ENCODE measurements at regions of chr4 and their contacts with region 1.

Region 1: DNA sequence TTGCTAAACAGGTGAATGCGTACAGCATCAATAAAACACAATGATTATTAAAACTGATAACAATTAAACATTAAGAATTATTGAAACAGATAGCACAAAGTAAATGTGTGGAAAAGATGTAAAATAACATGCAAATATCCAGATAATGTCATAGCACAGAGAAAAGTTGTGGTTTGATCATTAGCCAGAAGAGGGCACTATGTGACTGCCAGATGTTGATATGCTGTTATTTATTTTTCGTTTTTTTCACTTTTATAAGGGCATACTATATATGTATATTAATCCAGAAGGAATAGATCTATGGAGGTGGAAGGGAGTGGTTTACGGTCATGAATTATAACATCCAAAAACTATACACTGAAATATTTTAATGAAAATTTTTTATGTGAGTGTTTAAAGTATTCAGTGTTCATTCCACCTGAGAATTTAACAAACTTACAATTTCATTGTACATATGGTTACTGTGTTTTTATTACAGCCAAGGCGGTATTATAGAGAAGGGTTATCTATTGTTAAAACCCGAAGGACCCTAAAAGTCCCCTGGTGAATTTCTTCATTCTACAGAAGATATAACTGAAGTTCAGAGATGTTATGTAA is 211.9 kb upstream of the UGT8 start:
- DNase-seq: no peak
- H3K4me3 ChIP-seq: no peak overlapping the region
- H3K27ac ChIP-seq: no peak overlapping the region
- H3K4me1 ChIP-seq: no peaks in the 10 kb centered on the region
- H3K27me3 ChIP-seq: no peaks in the 10 kb centered on the region
- CTCF ChIP-seq: peak in 5 of 6 experiments; percentile 34 to 69 (median 52)
- POLR2A ChIP-seq: no peak

Region 2: GRCh38 chr4:113394730-113395530 is 991.8 kb before region 1 on chr4:
- intact Hi-C with region 1: loop called (anchors 5 kb)
- DNase-seq: no peak
- H3K4me3 ChIP-seq: no peak overlapping the region
- H3K27ac ChIP-seq: peak overlapping the region in 1 of 4 donors; percentile 10
- H3K4me1 ChIP-seq: peaks cover 0 to 18% (median 4%) of the 10 kb centered on the region in 3 donors
- H3K27me3 ChIP-seq: no peaks in the 10 kb centered on the region
- CTCF ChIP-seq: peak; percentile 80 to 92 (median 90)
- POLR2A ChIP-seq: no peak

Region 3: GRCh38 chr4:114577386-114577785 is 190.7 kb after region 1 on chr4:
- intact Hi-C with region 1: no loop called
- DNase-seq: no peak
- H3K4me3 ChIP-seq: no peak overlapping the region
- H3K27ac ChIP-seq: no peak overlapping the region
- H3K4me1 ChIP-seq: no peaks in the 10 kb centered on the region
- H3K27me3 ChIP-seq: no peaks in the 10 kb centered on the region
- CTCF ChIP-seq: no peak
- POLR2A ChIP-seq: no peak

Region 4: DNA sequence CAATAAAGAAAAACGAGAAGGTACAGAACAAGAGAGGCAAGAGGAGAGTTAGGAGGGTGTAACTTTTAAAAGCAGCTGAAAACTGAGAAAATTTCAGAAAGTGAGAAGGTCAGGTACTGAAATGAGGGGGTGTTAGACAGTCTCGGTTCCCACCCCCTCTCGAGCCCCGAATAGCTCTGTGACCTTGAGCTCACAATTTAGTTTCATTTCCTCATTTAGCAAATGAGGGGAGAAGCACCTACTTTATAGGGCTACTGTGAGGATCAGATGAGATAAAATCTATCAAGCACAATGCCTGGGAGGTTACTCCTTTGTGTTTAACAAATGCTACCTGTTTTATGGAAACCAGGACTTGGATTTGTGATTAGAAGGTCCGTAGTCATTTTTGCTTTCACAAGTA is 216.8 kb after region 1 on chr4:
- intact Hi-C with region 1: no loop called
- DNase-seq: no peak
- H3K4me3 ChIP-seq: no peak overlapping the region
- H3K27ac ChIP-seq: no peak overlapping the region
- H3K4me1 ChIP-seq: peaks cover 6 to 30% (median 14%) of the 10 kb centered on the region in 3 donors
- H3K27me3 ChIP-seq: peaks cover 0 to 23% (median 0%) of the 10 kb centered on the region in 4 donors
- CTCF ChIP-seq: no peak
- POLR2A ChIP-seq: no peak

Region 5: DNA sequence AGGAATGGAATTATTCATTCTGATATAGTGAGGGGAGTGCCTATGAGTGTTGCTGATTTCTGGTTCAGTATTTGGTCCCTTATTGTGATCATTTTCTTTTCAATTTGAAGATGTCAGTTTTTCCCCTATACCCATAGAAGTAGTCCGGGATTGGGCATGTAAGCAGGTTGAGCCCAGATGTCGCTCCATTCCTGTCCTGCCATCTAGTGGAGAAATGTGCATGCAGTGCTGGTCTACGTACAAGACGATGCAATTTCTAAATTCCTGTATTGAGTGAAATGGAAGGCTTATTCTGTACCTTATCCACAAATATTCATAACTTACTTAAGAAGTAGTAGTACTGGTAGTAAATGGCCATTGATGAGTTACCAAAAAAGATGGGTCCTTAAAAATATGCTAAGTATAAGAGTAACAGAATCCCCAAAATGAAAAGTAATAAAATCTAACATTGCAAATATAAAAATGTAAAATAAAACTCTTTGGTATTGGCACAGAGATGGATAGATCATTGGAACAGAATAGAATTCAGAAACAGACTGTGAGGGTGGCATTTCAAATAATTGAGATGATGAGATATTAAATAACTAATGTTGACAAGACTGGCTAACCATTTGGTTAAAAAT is 272.8 kb after region 1 on chr4:
- intact Hi-C with region 1: loop called (anchors 10 kb)
- DNase-seq: no peak
- H3K4me3 ChIP-seq: no peak overlapping the region
- H3K27ac ChIP-seq: no peak overlapping the region
- H3K4me1 ChIP-seq: no peaks in the 10 kb centered on the region
- H3K27me3 ChIP-seq: no peaks in the 10 kb centered on the region
- CTCF ChIP-seq: peak; percentile 49 to 78 (median 68)
- POLR2A ChIP-seq: no peak

Region 6: DNA sequence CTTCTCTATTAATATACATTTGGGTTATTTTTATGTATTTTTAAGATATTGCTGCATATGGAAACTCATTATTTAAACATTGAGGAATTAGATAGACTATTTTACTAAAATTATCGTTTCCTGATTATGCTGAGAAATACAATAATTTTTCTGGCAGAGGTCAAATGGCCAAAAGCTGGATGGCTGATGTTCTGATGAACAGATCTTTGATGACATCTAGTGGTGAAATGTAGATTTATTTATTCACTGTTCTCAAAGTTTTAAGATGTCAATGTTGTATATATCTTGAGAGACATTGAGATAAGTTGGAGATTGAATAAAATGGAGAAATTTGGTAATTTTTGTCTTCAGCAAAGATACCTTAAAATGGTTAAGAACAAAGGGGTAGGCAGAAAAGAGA is 308.0 kb after region 1 on chr4:
- intact Hi-C with region 1: loop called (anchors 10 kb)
- DNase-seq: no peak
- H3K4me3 ChIP-seq: no peak overlapping the region
- H3K27ac ChIP-seq: no peak overlapping the region
- H3K4me1 ChIP-seq: no peaks in the 10 kb centered on the region
- H3K27me3 ChIP-seq: no peaks in the 10 kb centered on the region
- CTCF ChIP-seq: peak; percentile 19 to 62 (median 48)
- POLR2A ChIP-seq: no peak